GM12878 (cell line): ENCODE measurements at regions of chr19 and their contacts with region 1.

Region 1: DNA sequence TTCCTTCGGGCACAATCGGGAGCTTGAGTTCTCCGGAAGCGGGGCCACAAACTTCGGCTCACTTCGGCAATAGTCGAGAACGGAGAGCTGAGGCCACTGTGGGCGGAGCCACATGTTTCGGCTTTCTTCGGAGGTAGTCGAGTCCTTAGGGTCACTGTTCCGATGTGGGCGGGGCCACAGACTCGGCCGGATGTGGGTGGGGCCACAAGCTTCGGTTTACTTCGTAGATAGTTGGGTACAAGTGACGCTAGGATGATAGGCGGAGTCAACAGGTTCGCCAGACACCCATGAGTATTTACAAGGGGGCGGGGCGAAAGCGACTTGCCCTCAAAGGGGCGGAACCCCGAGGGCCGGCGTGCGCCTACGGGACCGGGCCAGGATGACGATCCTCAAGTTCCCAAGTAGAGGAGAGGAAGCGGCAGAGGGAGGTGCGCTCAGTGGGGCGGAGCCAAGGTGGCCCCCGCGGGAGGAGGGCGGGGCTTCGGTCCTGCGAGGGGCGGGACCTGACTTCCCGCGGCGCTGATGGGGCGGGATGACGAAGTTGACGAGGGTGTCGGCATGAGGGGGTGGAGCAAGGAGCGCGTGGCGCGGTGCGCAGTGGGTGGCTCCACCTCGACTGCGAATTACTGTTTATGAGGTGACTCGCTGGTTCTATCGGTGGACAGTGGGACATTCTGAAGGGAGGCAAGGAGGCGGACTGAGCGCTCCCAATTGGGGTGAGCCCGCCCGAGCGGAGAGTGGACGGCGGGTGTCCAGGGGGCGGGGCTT is 539 bp upstream of the MBOAT7 start:
- DNase-seq: peak; percentile 97
- ATAC-seq: peak; percentile 73
- H3K4me3 ChIP-seq: peak overlapping the region; percentile 62
- H3K27ac ChIP-seq: peak overlapping the region; percentile 99
- H3K4me1 ChIP-seq: peaks cover 14% of the 10 kb centered on the region
- H3K27me3 ChIP-seq: no peaks in the 10 kb centered on the region
- CTCF ChIP-seq: no peak
- EP300 ChIP-seq: no peak; a peak in 1 of 4 replicates
- POLR2A ChIP-seq: peak; percentile 90
- RAD21 ChIP-seq: no peak

Region 2: GRCh38 chr19:54096617-54097129 is 93.2 kb before region 1 on chr19:
- CTCF ChIA-PET with region 1: no interaction called
- POLR2A ChIA-PET with region 1: no interaction called
- RAD21 ChIA-PET with region 1: no interaction called
- SMC1A ChIA-PET with region 1: no interaction called
- in situ Hi-C with region 1: no loop called
- intact Hi-C with region 1: no loop called
- DNase-seq: no peak
- ATAC-seq: peak; percentile 38; the same call in 1 of the 3 replicates
- H3K4me3 ChIP-seq: no peak overlapping the region
- H3K27ac ChIP-seq: no peak overlapping the region
- H3K4me1 ChIP-seq: no peaks in the 10 kb centered on the region
- H3K27me3 ChIP-seq: no peaks in the 10 kb centered on the region; a peak in 2 of 4 replicates
- CTCF ChIP-seq: peak; percentile 4 to 28 (median 22); a peak in 1 of 6 replicates
- EP300 ChIP-seq: no peak
- POLR2A ChIP-seq: no peak
- RAD21 ChIP-seq: peak; percentile 31

Region 3: DNA sequence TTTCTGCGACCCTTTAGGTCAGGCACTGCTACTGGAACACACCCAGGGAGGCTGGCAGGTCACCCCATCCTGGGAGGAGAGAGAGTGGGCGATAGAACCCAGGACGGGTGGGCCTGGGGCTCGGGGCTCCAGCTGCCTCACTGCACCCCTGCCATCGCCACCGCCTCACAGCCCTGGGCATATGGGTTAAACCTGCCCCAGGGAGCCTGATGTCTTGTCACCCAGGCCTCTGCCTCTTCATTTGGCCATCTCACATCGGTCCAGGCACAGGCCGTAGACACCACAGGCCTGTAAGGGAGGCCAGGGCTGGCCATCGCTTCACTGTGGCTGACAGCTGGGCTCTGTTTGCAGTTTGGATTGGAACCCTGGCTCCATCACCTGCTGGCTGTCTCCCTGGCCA is 64.2 kb before region 1 on chr19:
- CTCF ChIA-PET with region 1: no interaction called
- POLR2A ChIA-PET with region 1: no interaction called
- RAD21 ChIA-PET with region 1: no interaction called
- SMC1A ChIA-PET with region 1: no interaction called
- in situ Hi-C with region 1: no loop called
- intact Hi-C with region 1: no loop called
- DNase-seq: no peak
- ATAC-seq: no peak
- H3K4me3 ChIP-seq: no peak overlapping the region
- H3K27ac ChIP-seq: no peak overlapping the region
- H3K4me1 ChIP-seq: no peaks in the 10 kb centered on the region
- H3K27me3 ChIP-seq: no peaks in the 10 kb centered on the region
- CTCF ChIP-seq: no peak
- EP300 ChIP-seq: no peak
- POLR2A ChIP-seq: peak; percentile 19; the same call in 1 of the 2 replicates
- RAD21 ChIP-seq: no peak

Region 4: GRCh38 chr19:54137086-54137921 is 52.6 kb before region 1 on chr19 and contains the start of gene CNOT3:
- CTCF ChIA-PET with region 1: interaction called, 7 read pairs
- POLR2A ChIA-PET with region 1: interaction called, 36 read pairs
- RAD21 ChIA-PET with region 1: interaction called, 23 read pairs
- SMC1A ChIA-PET with region 1: interaction called, 6 read pairs
- in situ Hi-C with region 1: no loop called
- intact Hi-C with region 1: no loop called
- DNase-seq: peak; percentile 100
- ATAC-seq: peak; percentile 92
- H3K4me3 ChIP-seq: peak within 1 kb of the TSS; percentile 91
- H3K27ac ChIP-seq: peak within 1 kb of the TSS; percentile 90
- H3K4me1 ChIP-seq: peaks cover 19% of the 10 kb centered on the region
- H3K27me3 ChIP-seq: no peaks in the 10 kb centered on the region
- CTCF ChIP-seq: no peak
- EP300 ChIP-seq: no peak
- POLR2A ChIP-seq: peak; percentile 91
- RAD21 ChIP-seq: no peak
- polyA plus RNA-seq, gene CNOT3: 0.14 to 0.62 TPM

Region 5: DNA sequence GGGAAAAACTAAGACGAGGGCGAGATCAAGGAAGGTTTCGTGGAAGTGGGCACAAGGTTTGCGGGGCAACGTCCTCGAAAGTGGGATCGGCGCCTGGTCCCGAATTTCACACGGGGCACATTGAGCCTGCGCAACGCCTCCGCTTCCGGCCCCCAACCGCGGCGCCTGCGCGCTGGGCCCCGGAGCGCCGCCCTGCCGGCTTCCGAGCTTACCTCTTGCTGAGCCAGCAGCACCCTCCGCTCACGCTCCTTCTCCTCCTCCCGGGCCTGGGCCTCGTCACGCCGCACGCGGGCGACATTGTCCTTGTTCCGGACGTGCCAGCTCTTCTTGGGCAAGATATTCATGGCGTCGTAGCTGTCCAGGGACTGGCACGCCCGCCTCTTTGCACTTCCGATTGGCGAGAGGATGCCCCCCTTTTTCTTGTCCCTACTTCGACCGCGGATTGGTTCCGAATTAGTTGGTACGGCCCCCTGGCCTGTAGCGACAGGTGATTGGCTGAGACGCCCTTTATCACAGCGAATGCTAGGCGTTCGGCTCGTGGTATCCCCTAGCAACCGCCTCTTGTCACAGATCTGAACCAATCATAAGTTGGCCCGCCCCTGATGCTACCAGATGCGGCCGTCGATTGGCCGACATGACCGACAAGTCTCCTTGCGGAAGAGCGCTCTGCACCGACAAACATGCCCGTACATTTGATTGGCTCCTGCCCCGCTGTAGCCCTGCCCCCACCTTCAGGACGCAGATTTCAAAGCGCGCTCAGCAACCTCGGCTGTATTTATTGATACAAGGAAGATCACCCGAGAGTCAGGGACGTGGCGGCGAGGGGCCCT is 30.4 kb before region 1 on chr19 and contains the start of gene LENG1:
- CTCF ChIA-PET with region 1: interaction called, 6 read pairs
- POLR2A ChIA-PET with region 1: interaction called, 15 read pairs
- RAD21 ChIA-PET with region 1: interaction called, 5 read pairs
- SMC1A ChIA-PET with region 1: interaction called, 4 read pairs
- in situ Hi-C with region 1: no loop called
- intact Hi-C with region 1: loop called (anchors 1 kb)
- DNase-seq: peak; percentile 99
- ATAC-seq: peak; percentile 95
- H3K4me3 ChIP-seq: peak within 1 kb of the TSS; percentile 95
- H3K27ac ChIP-seq: peak within 1 kb of the TSS; percentile 93
- H3K4me1 ChIP-seq: peaks cover 4% of the 10 kb centered on the region; the same call in 1 of the 2 replicates
- H3K27me3 ChIP-seq: no peaks in the 10 kb centered on the region
- CTCF ChIP-seq: peak in 2 of 3 experiments; percentile 16 to 34; a peak in 3 of 6 replicates
- EP300 ChIP-seq: no peak
- POLR2A ChIP-seq: peak; percentile 94
- RAD21 ChIP-seq: no peak
- polyA plus RNA-seq, gene LENG1: 0.21 to 1.1 TPM

Region 6: GRCh38 chr19:54201172-54201701 is 11.3 kb after region 1 on chr19:
- CTCF ChIA-PET with region 1: interaction called, 15 read pairs
- POLR2A ChIA-PET with region 1: interaction called, 100 read pairs
- RAD21 ChIA-PET with region 1: interaction called, 4 read pairs
- SMC1A ChIA-PET with region 1: interaction called, 26 read pairs
- in situ Hi-C with region 1: no loop called
- intact Hi-C with region 1: no loop called
- DNase-seq: no peak
- ATAC-seq: peak; percentile 8
- H3K4me3 ChIP-seq: peak overlapping the region; percentile 92
- H3K27ac ChIP-seq: peak overlapping the region; percentile 96
- H3K4me1 ChIP-seq: peaks cover 19% of the 10 kb centered on the region
- H3K27me3 ChIP-seq: no peaks in the 10 kb centered on the region
- CTCF ChIP-seq: no peak
- EP300 ChIP-seq: no peak
- POLR2A ChIP-seq: no peak
- RAD21 ChIP-seq: no peak

Region 7: DNA sequence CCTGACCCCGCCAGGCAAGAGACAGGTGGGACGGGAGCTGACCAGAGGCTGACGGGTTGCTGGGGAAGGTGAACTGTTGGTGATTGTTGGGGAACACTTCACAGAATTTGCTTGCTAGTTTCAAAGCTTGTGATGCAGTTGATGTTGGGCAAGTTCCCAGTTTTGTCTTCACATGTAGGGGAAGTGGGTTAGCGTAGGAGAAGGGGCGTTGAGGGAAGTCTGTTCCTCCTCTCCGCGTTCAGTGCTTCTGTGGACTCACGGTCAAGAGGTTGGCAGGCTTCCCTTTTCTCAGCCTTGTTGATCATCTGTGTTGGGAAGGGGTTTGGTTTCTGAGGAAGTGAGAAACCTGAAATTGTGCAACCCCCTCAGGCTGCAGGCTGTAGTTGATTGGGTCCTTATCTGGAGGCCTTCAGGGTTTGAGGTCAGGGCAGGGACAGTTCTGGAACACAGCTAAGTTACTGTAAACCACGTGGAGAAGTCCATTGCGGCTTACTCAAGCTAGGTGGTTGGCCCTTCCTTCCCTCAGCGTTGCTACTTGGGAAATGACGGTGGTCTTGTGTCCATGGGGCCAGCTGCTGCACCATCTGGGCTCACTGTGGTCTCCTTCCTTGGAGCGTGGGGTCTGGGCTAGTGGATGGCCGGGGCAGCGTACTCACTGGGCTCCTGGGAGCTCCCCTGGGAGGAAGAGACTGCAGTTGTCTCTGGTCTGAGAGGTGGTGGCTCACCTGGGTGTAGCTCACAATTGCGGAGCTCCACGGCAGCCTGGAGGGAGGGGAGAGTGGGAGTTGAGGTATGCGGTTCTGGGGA is 18.3 kb after region 1 on chr19:
- CTCF ChIA-PET with region 1: interaction called, 8 read pairs
- POLR2A ChIA-PET with region 1: interaction called, 100 read pairs
- RAD21 ChIA-PET with region 1: interaction called, 4 read pairs
- SMC1A ChIA-PET with region 1: interaction called, 26 read pairs
- in situ Hi-C with region 1: no loop called
- intact Hi-C with region 1: no loop called
- DNase-seq: peak; percentile 84
- ATAC-seq: peak; percentile 62
- H3K4me3 ChIP-seq: peak overlapping the region; percentile 24; the same call in 1 of the 2 replicates
- H3K27ac ChIP-seq: peak overlapping the region; percentile 35
- H3K4me1 ChIP-seq: peaks cover 60% of the 10 kb centered on the region
- H3K27me3 ChIP-seq: no peaks in the 10 kb centered on the region
- CTCF ChIP-seq: no peak
- EP300 ChIP-seq: no peak
- POLR2A ChIP-seq: peak; percentile 76
- RAD21 ChIP-seq: no peak

Region 8: GRCh38 chr19:54231077-54231931 is 41.4 kb after region 1 on chr19:
- CTCF ChIA-PET with region 1: interaction called, 17 read pairs
- POLR2A ChIA-PET with region 1: interaction called, 7 read pairs
- RAD21 ChIA-PET with region 1: interaction called, 5 read pairs
- SMC1A ChIA-PET with region 1: interaction called, 3 read pairs
- in situ Hi-C with region 1: no loop called
- intact Hi-C with region 1: no loop called
- DNase-seq: no peak
- ATAC-seq: peak; percentile 100
- H3K4me3 ChIP-seq: no peak overlapping the region
- H3K27ac ChIP-seq: no peak overlapping the region
- H3K4me1 ChIP-seq: no peaks in the 10 kb centered on the region
- H3K27me3 ChIP-seq: no peaks in the 10 kb centered on the region
- CTCF ChIP-seq: peak; percentile 99; a peak in 5 of 6 replicates
- EP300 ChIP-seq: no peak
- POLR2A ChIP-seq: no peak
- RAD21 ChIP-seq: peak; percentile 91

Region 9: DNA sequence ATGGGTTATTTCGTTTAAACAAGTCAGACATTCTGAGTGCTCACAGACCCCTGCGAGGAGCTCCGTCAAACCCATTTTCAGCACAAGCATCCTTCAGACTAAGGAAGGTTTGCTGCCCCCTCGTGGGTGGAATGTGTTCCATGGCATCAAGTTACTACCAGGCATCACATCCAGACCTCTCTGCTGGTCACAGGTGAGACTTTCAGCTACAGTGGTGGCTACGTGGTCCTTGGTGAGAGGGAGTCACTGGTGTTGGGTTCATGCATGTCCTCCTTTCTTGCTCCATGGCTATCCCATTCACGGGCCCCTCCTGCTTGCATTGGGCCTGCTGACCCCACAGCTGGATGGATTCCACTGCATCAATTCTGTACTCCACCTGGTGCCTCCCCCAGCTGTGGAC is 76.2 kb after region 1 on chr19:
- CTCF ChIA-PET with region 1: interaction called, 16 read pairs
- POLR2A ChIA-PET with region 1: interaction called, 8 read pairs
- RAD21 ChIA-PET with region 1: interaction called, 3 read pairs
- SMC1A ChIA-PET with region 1: interaction called, 4 read pairs
- in situ Hi-C with region 1: no loop called
- intact Hi-C with region 1: no loop called
- DNase-seq: peak; percentile 19
- ATAC-seq: peak; percentile 90
- H3K4me3 ChIP-seq: no peak overlapping the region
- H3K27ac ChIP-seq: no peak overlapping the region
- H3K4me1 ChIP-seq: no peaks in the 10 kb centered on the region
- H3K27me3 ChIP-seq: peaks cover 0 to 3% of the 10 kb centered on the region in 2 experiments; a peak in 1 of 4 replicates
- CTCF ChIP-seq: peak; percentile 75 to 87 (median 77)
- EP300 ChIP-seq: no peak
- POLR2A ChIP-seq: no peak
- RAD21 ChIP-seq: peak; percentile 58; the same call in 1 of the 2 replicates